ENCODE measurements at regions of chr3 and their contacts with region 1.

Region 1: DNA sequence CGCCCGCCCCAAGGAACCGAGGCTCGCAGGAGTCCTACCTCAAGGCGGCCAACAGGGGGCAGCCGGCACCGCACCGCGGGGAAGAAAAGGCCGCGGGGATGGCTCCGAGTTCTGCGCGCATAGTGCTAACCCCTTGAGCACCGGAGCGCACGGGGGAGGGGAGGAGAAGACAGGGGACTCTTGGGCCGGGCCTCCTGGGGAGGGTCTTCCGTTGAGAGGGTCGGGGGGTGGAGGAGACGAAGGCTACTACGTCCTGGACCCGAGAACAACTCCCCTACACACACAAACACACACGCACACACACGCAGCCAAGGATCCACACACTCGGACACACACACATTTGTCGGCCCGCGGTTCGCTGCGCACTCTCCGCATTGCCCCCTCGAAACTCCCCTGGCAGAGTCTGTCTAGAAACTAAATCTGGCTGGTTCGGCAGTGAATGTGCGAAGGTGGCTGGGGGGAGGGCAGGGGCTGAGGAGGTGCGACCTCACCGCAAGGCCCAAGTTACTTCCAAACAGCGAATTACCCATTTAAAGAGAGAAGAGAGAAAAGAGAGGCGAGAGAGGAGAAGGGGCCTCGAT is 1.8 kb downstream of the WNT5A start:
- DNase-seq: peak; percentile 88
- ATAC-seq: peak; percentile 40
- H3K4me3 ChIP-seq: peak overlapping the region; percentile 89
- H3K27ac ChIP-seq: peak overlapping the region; percentile 98
- H3K4me1 ChIP-seq: peaks cover 14% of the 10 kb centered on the region
- H3K27me3 ChIP-seq: no peaks in the 10 kb centered on the region
- CTCF ChIP-seq: peak; percentile 66
- POLR2A ChIP-seq: no peak; the same call in 1 of the 2 replicates
- RAD21 ChIP-seq: peak; percentile 77

Region 2: DNA sequence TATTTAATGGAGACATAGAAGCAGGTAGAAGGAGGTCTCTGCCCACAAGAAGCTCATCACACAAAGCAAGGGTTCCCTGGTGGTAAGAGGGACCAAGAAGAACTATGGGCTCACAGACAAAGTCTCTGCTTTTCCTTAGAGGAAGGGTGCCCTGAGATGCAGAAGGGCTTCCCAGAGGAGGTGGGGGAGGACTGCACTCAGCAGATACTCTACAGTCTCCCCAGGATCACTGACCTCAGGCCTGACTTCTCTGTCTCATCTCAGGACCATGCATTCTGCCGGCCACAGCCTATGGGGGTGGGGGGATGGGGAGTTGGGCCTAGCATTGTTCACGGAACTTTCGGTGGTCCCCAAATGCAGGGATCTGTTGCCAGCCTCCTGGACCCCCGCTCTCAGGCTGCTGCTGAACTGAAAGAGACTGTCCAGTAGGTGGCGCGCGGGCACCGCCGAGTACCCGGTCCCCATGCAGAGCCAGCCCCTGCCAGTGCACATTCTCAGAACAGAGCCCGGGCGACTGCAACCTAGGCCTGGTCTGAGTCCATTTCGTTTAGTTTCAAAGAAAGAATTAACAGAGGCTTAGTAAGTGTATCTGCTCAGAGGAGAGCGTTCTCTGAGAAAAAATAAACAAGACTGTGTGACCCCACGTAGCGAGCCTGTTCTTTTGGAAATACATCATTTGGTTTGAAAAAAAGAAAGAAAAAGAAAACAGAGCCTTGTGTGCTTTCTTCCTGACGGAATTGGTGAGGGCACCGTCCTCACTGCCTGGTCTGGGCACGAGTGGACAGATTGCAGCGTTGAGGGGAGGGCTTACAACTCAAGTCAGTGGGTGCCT is 631.5 kb before region 1 on chr3:
- CTCF ChIA-PET with region 1: no interaction called
- POLR2A ChIA-PET with region 1: no interaction called
- dilution Hi-C with region 1: no loop called
- in situ Hi-C with region 1: no loop called
- intact Hi-C with region 1: loop called (anchors 1 kb)
- DNase-seq: peak; percentile 74
- ATAC-seq: peak; percentile 98
- H3K4me3 ChIP-seq: no peak overlapping the region
- H3K27ac ChIP-seq: peak overlapping the region; percentile 79
- H3K4me1 ChIP-seq: peaks cover 8% of the 10 kb centered on the region
- H3K27me3 ChIP-seq: peaks cover 5% of the 10 kb centered on the region; the same call in 1 of the 2 replicates
- CTCF ChIP-seq: peak; percentile 83
- POLR2A ChIP-seq: no peak
- RAD21 ChIP-seq: peak; percentile 93

Region 3: GRCh38 chr3:55042591-55042990 is 442.7 kb before region 1 on chr3:
- CTCF ChIA-PET with region 1: no interaction called
- POLR2A ChIA-PET with region 1: no interaction called
- dilution Hi-C with region 1: no loop called
- in situ Hi-C with region 1: no loop called
- intact Hi-C with region 1: loop called (anchors 2 kb)
- DNase-seq: peak; percentile 30
- ATAC-seq: peak; percentile 40; the same call in 1 of the 2 replicates
- H3K4me3 ChIP-seq: no peak overlapping the region
- H3K27ac ChIP-seq: no peak overlapping the region
- H3K4me1 ChIP-seq: no peaks in the 10 kb centered on the region
- H3K27me3 ChIP-seq: no peaks in the 10 kb centered on the region
- CTCF ChIP-seq: peak; percentile 41
- POLR2A ChIP-seq: no peak
- RAD21 ChIP-seq: peak; percentile 73

Region 4: DNA sequence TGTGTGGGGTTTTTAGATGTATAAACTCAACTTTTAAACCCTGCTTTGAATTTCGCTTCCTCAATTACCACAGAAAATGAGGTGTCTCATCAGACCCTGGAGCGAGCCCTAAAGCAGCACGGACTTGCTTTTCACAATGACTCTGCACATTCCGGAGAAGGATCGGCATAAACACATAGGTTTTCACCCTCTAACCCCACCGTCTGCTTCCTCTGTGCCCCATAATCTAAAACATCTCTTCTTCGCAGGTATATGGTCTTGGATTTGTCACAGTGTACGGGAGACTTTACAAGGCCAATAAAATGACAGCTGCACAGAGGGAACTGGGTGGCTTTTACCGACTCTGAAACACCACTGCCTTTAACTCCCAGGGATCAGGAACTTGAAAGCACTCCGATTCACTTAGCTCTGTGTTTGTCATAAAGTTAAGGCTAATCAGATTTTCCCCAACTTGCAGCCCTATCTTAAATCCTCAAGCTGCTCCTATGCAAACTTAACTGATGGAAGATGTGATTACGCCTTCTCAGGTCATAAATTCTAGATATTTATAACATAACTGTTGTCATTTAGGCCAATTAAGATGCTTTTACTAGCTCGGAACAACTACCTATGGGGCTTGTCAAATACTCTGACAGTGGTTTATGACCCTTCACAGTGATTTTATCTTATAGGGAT is 135.2 kb after region 1 on chr3:
- CTCF ChIA-PET with region 1: no interaction called
- POLR2A ChIA-PET with region 1: interaction called, 3 read pairs
- dilution Hi-C with region 1: no loop called
- in situ Hi-C with region 1: no loop called
- intact Hi-C with region 1: loop called (anchors 1 kb)
- DNase-seq: peak; percentile 87
- ATAC-seq: peak; percentile 49
- H3K4me3 ChIP-seq: no peak overlapping the region
- H3K27ac ChIP-seq: peak overlapping the region; percentile 80
- H3K4me1 ChIP-seq: peaks cover 15% of the 10 kb centered on the region
- H3K27me3 ChIP-seq: no peaks in the 10 kb centered on the region
- CTCF ChIP-seq: no peak
- POLR2A ChIP-seq: no peak
- RAD21 ChIP-seq: no peak

Region 5: GRCh38 chr3:55813268-55814097 is 328.2 kb after region 1 on chr3:
- CTCF ChIA-PET with region 1: no interaction called
- POLR2A ChIA-PET with region 1: no interaction called
- dilution Hi-C with region 1: no loop called
- in situ Hi-C with region 1: no loop called
- intact Hi-C with region 1: loop called (anchors 5 kb)
- DNase-seq: no peak
- ATAC-seq: no peak
- H3K4me3 ChIP-seq: no peak overlapping the region
- H3K27ac ChIP-seq: no peak overlapping the region
- H3K4me1 ChIP-seq: no peaks in the 10 kb centered on the region
- H3K27me3 ChIP-seq: peaks cover 22% of the 10 kb centered on the region
- CTCF ChIP-seq: no peak
- POLR2A ChIP-seq: no peak
- RAD21 ChIP-seq: no peak

Region 6: DNA sequence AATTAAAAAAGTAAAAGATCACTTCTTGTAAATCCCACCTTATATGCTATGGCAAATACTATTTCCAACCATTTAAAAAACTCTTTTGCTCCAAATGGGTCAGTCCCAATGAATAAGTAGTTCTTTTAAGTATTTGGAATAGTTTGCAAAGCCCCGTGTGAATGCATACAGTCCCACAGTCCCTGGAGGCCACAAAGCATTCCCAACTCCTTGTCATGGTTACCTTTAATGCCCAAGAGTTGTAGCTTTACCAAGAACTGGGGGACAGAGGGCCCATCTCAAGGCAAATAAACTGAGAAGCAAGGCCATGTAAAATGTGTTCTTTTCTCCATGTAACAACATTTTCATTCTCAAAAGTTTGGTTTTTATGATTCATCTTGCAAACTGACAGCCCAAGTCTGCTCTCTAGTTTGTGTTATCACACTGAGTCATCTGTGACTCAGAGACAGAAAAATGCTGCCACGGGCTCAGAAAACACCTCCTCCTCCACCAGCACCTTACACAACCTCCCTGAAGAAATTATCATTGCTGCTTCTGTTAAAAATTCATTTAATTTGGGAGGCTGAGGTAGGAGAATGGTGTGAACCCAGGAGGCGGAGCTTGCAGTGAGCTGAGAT is 646.8 kb after region 1 on chr3:
- CTCF ChIA-PET with region 1: no interaction called
- POLR2A ChIA-PET with region 1: no interaction called
- dilution Hi-C with region 1: no loop called
- in situ Hi-C with region 1: no loop called
- intact Hi-C with region 1: loop called (anchors 10 kb)
- DNase-seq: peak; percentile 95
- ATAC-seq: peak; percentile 88
- H3K4me3 ChIP-seq: no peak overlapping the region
- H3K27ac ChIP-seq: peak overlapping the region; percentile 80; the same call in 1 of the 2 replicates
- H3K4me1 ChIP-seq: peaks cover 3% of the 10 kb centered on the region
- H3K27me3 ChIP-seq: peaks cover 6% of the 10 kb centered on the region
- CTCF ChIP-seq: no peak
- POLR2A ChIP-seq: no peak
- RAD21 ChIP-seq: no peak

Measured in IMR-90 (cell line).